Caco-2 (cell line): ENCODE measurements at regions of chr12 and their contacts with region 1.

Region 1: DNA sequence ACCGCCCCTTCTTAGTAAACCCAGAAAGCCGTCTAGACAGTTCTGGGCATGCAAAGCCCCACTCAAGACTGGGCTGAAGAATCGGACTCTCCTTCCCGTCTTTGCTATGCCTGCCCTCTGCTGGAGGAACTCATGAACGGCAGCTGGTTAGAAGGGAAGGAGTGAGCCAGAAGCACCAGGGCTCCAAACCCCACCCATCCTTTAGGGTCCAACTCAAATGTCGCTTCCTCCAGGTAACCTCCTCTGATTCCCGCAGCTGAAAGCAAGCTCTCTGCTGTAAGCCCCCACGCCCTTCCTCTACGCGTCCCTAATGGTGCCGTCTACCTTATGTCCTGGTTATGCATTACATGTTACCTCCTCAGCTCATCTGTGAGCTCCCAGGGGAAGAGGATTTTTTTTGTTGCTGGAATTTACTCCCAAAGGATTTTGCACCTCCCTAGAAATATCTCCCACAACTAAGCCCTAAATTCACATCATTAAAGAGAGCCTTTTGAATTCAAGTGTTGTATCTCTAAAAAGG is 59.0 kb upstream of the SCN8A start:
- DNase-seq: peak; percentile 90 to 92
- H3K4me3 ChIP-seq: no peak overlapping the region
- H3K4me3 Mint-ChIP-seq: peak overlapping the region; percentile 41
- H3K27ac Mint-ChIP-seq: peak overlapping the region; percentile 82
- H3K4me1 ChIP-seq: peaks cover 51% of the 10 kb centered on the region
- H3K4me1 Mint-ChIP-seq: peaks cover 57% of the 10 kb centered on the region
- H3K27me3 ChIP-seq: no peaks in the 10 kb centered on the region
- H3K27me3 Mint-ChIP-seq: no peaks in the 10 kb centered on the region
- CTCF ChIP-seq: peak; percentile 95 to 98

Region 2: GRCh38 chr12:51399891-51400290 is 132.1 kb before region 1 on chr12:
- CTCF ChIA-PET with region 1: interaction called, 4 read pairs
- POLR2A ChIA-PET with region 1: no interaction called
- intact Hi-C with region 1: loop called (anchors 1 kb)
- DNase-seq: peak; percentile 97 to 99
- H3K4me3 ChIP-seq: no peak overlapping the region
- H3K4me3 Mint-ChIP-seq: peak overlapping the region; percentile 59
- H3K27ac Mint-ChIP-seq: peak overlapping the region; percentile 90
- H3K4me1 ChIP-seq: peaks cover 82% of the 10 kb centered on the region
- H3K4me1 Mint-ChIP-seq: peaks cover 78% of the 10 kb centered on the region
- H3K27me3 ChIP-seq: no peaks in the 10 kb centered on the region
- H3K27me3 Mint-ChIP-seq: no peaks in the 10 kb centered on the region
- CTCF ChIP-seq: no peak

Region 3: DNA sequence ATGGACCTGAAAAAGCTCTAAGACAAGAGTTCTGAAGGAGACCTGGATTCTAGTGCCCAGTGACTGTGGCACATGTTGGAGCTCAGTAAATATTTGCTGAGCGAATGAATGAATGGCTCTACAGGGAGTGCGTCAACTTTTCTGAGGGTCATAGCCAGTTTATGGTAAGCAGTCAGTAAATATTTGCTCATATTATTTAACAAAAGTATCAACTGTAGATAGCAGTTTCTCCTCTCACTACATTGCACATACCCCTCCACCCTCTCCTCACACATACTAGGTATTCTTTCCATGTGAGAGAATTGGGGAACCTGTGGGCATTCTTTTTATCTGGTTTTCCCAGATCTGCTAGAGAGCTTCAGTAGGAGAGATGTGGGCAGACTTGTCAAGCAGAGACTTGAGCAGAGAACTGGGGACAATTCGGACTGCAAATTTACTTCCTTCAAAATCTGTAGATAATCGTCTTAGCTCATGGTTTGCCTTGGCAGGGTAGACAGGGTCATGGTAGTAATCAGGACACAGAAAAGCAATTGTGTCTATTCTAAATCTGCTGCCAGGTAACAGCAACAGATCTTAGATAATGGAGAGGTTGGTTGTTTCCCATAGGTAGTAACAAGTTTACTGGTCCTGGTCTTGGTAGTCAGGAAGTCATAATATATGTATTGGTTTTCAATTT is 101.7 kb before region 1 on chr12:
- CTCF ChIA-PET with region 1: interaction called, 10 read pairs
- POLR2A ChIA-PET with region 1: interaction called, 3 read pairs
- intact Hi-C with region 1: loop called (anchors 1 kb)
- DNase-seq: peak; percentile 68 to 69
- H3K4me3 ChIP-seq: no peak overlapping the region
- H3K4me3 Mint-ChIP-seq: no peak overlapping the region
- H3K27ac Mint-ChIP-seq: peak overlapping the region; percentile 79
- H3K4me1 ChIP-seq: peaks cover 48% of the 10 kb centered on the region
- H3K4me1 Mint-ChIP-seq: peaks cover 54% of the 10 kb centered on the region
- H3K27me3 ChIP-seq: no peaks in the 10 kb centered on the region
- H3K27me3 Mint-ChIP-seq: no peaks in the 10 kb centered on the region
- CTCF ChIP-seq: no peak

Region 4: GRCh38 chr12:51471111-51471864 is 60.8 kb before region 1 on chr12:
- CTCF ChIA-PET with region 1: interaction called, 11 read pairs
- POLR2A ChIA-PET with region 1: no interaction called
- intact Hi-C with region 1: no loop called
- DNase-seq: no peak
- H3K4me3 ChIP-seq: no peak overlapping the region
- H3K4me3 Mint-ChIP-seq: no peak overlapping the region
- H3K27ac Mint-ChIP-seq: peak overlapping the region; percentile 4
- H3K4me1 ChIP-seq: peaks cover 28% of the 10 kb centered on the region
- H3K4me1 Mint-ChIP-seq: peaks cover 15% of the 10 kb centered on the region
- H3K27me3 ChIP-seq: no peaks in the 10 kb centered on the region
- H3K27me3 Mint-ChIP-seq: no peaks in the 10 kb centered on the region
- CTCF ChIP-seq: no peak

Region 5: DNA sequence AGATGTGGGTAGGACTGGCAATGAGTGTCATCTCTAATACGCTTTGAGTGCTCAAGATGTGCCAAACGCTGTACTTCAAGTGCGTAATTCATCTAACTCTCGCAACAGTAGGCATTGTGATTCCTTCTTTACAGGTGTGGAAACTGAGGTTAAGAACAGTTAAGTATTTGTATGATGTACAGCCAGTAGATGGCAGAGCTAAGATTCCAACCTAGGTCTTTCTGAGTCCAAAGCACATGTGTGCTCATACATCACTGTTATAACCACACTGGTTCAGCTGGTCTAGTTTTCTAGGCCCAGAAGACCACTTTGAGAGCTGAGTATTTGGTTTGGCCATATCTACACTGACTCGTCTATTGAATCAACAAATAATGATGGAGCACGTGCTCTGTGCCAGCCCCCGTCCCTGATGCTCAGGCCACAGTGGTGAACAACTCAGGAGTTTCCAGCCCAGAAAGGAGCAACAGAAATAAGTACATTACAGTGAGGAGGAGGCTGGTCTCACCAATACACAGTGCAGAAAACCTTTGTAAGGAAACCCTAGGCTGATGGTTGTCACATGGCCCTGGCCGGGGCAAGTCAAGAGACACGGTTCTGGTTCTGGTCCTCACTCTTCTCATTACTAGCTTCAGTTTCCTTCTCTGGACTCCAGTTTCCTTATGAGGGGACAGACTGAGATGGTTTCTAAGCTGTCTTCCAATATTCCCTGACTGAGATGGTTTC is 10.3 kb before region 1 on chr12:
- CTCF ChIA-PET with region 1: interaction called, 20 read pairs
- POLR2A ChIA-PET with region 1: no interaction called
- intact Hi-C with region 1: loop called (anchors 1 kb)
- DNase-seq: no peak
- H3K4me3 ChIP-seq: no peak overlapping the region
- H3K4me3 Mint-ChIP-seq: no peak overlapping the region
- H3K27ac Mint-ChIP-seq: no peak overlapping the region
- H3K4me1 ChIP-seq: peaks cover 52% of the 10 kb centered on the region
- H3K4me1 Mint-ChIP-seq: peaks cover 30% of the 10 kb centered on the region
- H3K27me3 ChIP-seq: no peaks in the 10 kb centered on the region
- H3K27me3 Mint-ChIP-seq: no peaks in the 10 kb centered on the region
- CTCF ChIP-seq: peak; percentile 2 to 14

Region 6: GRCh38 chr12:51601241-51601640 is 69.2 kb after region 1 on chr12:
- CTCF ChIA-PET with region 1: no interaction called
- POLR2A ChIA-PET with region 1: no interaction called
- intact Hi-C with region 1: no loop called
- DNase-seq: no peak
- H3K4me3 ChIP-seq: no peak overlapping the region
- H3K4me3 Mint-ChIP-seq: no peak overlapping the region
- H3K27ac Mint-ChIP-seq: no peak overlapping the region
- H3K4me1 ChIP-seq: no peaks in the 10 kb centered on the region
- H3K4me1 Mint-ChIP-seq: no peaks in the 10 kb centered on the region
- H3K27me3 ChIP-seq: no peaks in the 10 kb centered on the region
- H3K27me3 Mint-ChIP-seq: no peaks in the 10 kb centered on the region
- CTCF ChIP-seq: no peak

Region 7: GRCh38 chr12:51678086-51678724 is 146.2 kb after region 1 on chr12:
- CTCF ChIA-PET with region 1: interaction called, 3 read pairs
- POLR2A ChIA-PET with region 1: no interaction called
- intact Hi-C with region 1: loop called (anchors 1 kb)
- DNase-seq: peak; percentile 64 to 77
- H3K4me3 ChIP-seq: no peak overlapping the region
- H3K4me3 Mint-ChIP-seq: no peak overlapping the region
- H3K27ac Mint-ChIP-seq: no peak overlapping the region
- H3K4me1 ChIP-seq: 0 out of 2 replicates have a peak, but pooled peaks cover 4% of the 10 kb centered on the region
- H3K4me1 Mint-ChIP-seq: peaks cover 14% of the 10 kb centered on the region
- H3K27me3 ChIP-seq: no peaks in the 10 kb centered on the region
- H3K27me3 Mint-ChIP-seq: no peaks in the 10 kb centered on the region
- CTCF ChIP-seq: peak; percentile 86 to 94